ENCODE measurements at regions of chr2 and their contacts with region 1.

Region 1: DNA sequence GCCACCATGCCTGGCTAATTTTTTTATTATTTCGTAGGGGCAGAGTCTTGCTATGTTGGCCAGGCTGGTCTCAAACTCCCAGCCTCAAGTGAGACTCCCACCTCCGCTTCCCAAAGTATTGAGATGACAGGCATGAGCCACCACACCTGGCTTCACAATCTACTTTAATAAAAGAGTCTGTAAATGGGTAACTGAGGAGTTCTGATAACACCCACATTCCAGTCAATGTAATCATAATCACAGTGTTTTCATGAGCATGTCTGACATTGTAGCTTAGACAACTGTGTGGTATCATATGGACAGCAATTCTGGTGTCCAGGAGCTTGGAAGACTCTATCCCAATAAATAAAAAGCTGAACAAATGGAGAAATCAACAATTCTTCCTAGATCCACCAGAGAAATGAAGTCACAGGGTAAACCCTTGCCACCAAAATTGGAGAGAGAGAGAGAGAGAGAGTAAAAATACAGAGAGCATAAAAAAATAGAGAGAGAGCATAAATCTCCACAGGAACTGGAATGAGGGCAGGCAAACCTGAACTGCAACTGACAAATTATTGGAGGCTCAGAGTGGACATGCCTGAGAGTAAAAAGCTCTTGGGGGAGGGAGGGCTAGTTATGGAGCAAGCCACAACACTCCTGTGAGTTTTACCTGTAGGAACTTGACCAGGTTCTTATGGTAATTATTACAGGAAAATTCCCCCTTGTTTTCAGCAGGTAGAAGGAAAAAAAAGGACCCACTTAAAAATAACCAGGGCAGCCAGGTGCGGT is 12.4 kb upstream of the NBEAL1 start:
- DNase-seq: no peak
- ATAC-seq: no peak
- H3K4me3 Mint-ChIP-seq: no peak overlapping the region
- H3K27ac Mint-ChIP-seq: no peak overlapping the region
- H3K4me1 Mint-ChIP-seq: peaks cover 6% of the 10 kb centered on the region
- H3K27me3 Mint-ChIP-seq: no peaks in the 10 kb centered on the region; the same call in 1 of the 2 replicates
- CTCF ChIP-seq: no peak

Region 2: DNA sequence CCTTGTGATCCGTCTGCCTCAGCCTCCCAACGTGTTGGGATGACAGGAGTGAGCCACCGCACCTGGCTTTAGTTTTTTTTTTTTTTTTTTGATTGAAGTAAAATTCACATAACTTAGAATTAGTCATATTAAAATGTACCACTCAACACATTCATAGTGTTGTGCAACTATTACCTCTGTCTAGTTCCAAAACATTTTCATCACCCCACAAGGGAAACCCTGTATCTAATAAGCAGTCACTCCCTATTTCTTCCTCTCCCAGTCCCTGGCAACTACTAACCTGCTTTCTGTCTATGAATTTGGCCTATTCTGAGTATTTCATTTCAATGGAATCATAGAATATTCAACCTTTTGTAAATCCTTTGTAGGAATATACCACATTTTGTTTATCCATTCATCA is 491.3 kb before region 1 on chr2:
- CTCF ChIA-PET with region 1: no interaction called
- POLR2A ChIA-PET with region 1: interaction called, 16 read pairs
- DNase-seq: no peak
- ATAC-seq: no peak
- H3K4me3 Mint-ChIP-seq: no peak overlapping the region
- H3K27ac Mint-ChIP-seq: no peak overlapping the region
- H3K4me1 Mint-ChIP-seq: no peaks in the 10 kb centered on the region
- H3K27me3 Mint-ChIP-seq: no peaks in the 10 kb centered on the region
- CTCF ChIP-seq: no peak